ENCODE measurements at regions of chrX and their contacts with region 1.

Region 1: DNA sequence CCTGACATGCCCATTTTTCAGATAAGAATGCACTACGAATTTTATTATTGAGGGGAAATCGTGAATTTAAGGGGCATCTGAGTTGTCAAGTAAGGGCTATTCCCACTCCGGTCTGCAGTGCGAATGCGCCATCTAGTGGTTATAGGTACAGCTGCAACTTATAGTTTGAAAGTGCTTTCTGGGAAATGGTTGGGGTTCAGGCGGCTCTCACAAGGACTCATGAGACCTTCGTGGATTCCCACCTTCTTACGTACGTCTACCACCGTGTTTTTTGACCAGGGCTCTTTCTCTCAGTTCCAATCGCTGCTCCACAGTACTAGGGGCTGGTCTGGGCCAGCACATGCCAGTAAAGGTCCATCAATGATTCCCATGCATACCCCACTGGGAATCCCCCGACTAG is 12.3 kb downstream of the MSL3 start:
- DNase-seq: peak; percentile 74
- H3K4me3 ChIP-seq: no peak overlapping the region; a peak in 1 of 4 replicates
- H3K27ac ChIP-seq: no peak overlapping the region
- H3K4me1 ChIP-seq: no peaks in the 10 kb centered on the region; a peak in 1 of 4 replicates
- H3K27me3 ChIP-seq: no peaks in the 10 kb centered on the region
- CTCF ChIP-seq: peak; percentile 96
- EP300 ChIP-seq: no peak
- RAD21 ChIP-seq: peak; percentile 85

Region 2: DNA sequence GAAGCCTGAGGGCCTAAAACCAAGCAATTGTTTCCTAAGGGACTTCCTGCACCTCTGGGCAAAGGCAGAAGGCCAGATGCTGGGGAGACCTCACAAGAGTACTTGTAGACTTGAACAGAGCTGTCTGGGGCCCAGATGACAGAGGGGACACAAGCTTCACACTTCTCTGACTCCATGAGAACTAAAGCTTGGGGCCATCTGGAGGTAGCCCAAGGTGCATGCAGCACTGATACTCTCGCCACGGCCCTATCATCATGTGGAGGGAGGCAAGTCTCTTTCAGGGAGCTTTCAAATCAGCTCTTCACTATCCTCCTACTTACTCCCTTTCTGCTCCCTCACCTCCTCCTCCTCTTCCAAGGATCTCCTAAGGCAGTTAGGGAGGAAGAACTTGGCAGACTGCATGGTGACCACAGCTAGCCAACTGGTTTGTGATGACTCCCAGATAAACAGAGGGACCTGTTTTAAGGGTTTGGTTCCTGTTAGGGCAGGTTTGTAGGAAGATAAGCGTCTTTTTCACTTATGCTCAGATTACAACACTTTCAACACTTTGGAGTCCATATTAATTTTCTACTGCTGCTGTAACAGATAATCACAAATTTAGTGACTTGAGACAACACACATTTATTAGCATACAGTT is 11.5 kb after region 1 on chrX:
- CTCF ChIA-PET with region 1: interaction called, 24 read pairs
- POLR2A ChIA-PET with region 1: no interaction called
- DNase-seq: no peak
- H3K4me3 ChIP-seq: no peak overlapping the region
- H3K27ac ChIP-seq: no peak overlapping the region
- H3K4me1 ChIP-seq: no peaks in the 10 kb centered on the region
- H3K27me3 ChIP-seq: no peaks in the 10 kb centered on the region
- CTCF ChIP-seq: no peak
- EP300 ChIP-seq: no peak
- RAD21 ChIP-seq: no peak

Region 3: DNA sequence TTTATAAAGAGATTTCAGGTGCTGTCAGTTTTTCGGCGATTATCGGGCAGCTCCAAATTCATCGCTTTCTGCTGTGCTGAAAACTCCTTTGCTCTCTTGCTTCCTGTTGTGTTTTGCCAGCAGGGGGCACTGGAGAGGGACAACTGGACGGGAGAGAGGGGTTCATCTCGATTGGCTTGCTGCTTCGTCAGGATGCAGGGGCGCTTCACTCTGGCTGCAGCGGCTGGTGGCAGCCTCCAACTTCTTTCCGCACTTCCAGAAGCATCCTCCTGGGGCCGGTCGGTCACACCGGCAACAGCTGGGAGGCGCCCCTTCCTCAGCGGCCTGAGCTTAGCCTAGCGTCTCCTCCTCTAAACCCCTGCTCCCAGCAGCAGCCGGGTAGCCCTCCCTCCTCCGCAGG is 17.2 kb after region 1 on chrX:
- CTCF ChIA-PET with region 1: interaction called, 24 read pairs
- POLR2A ChIA-PET with region 1: no interaction called
- DNase-seq: peak; percentile 64
- H3K4me3 ChIP-seq: peak overlapping the region; percentile 21 to 43
- H3K27ac ChIP-seq: no peak overlapping the region
- H3K4me1 ChIP-seq: peaks cover 0 to 2% of the 10 kb centered on the region in 2 experiments; a peak in 1 of 4 replicates
- H3K27me3 ChIP-seq: no peaks in the 10 kb centered on the region
- CTCF ChIP-seq: peak; percentile 67
- EP300 ChIP-seq: no peak
- RAD21 ChIP-seq: peak; percentile 56

Measured in SK-N-SH (cell line).